Colonic mucosa (tissue), 4 donors: ENCODE measurements at regions of chr3 and their contacts with region 1.

Region 1: DNA sequence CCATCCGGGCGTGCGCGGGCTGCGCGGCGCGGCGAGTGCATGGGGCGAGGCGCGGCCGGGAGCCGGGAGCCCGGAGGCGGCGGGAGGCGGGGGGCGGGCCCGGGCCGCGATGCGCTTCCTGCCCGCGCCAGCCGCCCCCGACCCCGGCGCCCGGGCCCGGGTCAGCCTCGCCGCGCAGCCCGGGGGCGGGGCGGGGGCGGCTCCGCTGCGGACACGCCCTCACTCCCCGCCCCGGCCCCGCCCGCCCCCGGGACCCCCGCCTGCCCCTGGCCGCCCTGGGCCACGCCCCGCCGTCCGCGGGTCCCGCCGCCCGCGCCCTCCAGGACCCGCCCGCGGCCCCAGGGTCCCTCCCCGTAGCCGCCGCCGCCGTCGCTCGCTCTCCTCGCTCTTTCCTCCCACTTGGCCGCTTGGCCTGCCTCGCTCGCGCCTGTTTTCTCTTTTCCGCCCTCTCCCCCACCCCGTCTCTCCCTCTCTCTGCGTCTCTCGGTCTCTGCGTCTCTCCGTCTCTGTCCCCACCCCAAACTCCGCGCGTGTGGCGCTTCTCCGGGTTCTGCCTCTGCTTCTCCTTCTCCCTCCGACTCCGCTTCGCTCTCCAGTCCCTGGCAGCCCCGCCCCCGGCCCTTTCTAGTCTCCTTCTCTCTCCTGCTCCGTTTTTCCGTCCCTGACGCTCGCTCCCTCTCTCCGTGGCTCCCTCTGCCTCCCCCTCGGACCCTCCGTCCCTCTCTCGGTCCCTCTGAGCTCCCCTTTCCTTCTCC is at the start of gene PLXND1:
- DNase-seq: peak; percentile 64
- H3K4me3 ChIP-seq: peak within 1 kb of the TSS; percentile 39
- H3K27ac ChIP-seq: peak within 1 kb of the TSS; percentile 64
- H3K4me1 ChIP-seq: no peaks in the 10 kb centered on the region
- H3K27me3 ChIP-seq: peaks cover 20% of the 10 kb centered on the region
- CTCF ChIP-seq: no peak
- total RNA-seq, gene PLXND1: 25.6 to 26.7 TPM

Region 2: GRCh38 chr3:129399145-129399894 is 207.5 kb before region 1 on chr3:
- intact Hi-C with region 1: no loop called
- DNase-seq: peak; percentile 88
- H3K4me3 ChIP-seq: peak overlapping the region; percentile 84
- H3K27ac ChIP-seq: peak overlapping the region; percentile 60
- H3K4me1 ChIP-seq: no peaks in the 10 kb centered on the region
- H3K27me3 ChIP-seq: no peaks in the 10 kb centered on the region
- CTCF ChIP-seq: peak; percentile 87

Region 3: DNA sequence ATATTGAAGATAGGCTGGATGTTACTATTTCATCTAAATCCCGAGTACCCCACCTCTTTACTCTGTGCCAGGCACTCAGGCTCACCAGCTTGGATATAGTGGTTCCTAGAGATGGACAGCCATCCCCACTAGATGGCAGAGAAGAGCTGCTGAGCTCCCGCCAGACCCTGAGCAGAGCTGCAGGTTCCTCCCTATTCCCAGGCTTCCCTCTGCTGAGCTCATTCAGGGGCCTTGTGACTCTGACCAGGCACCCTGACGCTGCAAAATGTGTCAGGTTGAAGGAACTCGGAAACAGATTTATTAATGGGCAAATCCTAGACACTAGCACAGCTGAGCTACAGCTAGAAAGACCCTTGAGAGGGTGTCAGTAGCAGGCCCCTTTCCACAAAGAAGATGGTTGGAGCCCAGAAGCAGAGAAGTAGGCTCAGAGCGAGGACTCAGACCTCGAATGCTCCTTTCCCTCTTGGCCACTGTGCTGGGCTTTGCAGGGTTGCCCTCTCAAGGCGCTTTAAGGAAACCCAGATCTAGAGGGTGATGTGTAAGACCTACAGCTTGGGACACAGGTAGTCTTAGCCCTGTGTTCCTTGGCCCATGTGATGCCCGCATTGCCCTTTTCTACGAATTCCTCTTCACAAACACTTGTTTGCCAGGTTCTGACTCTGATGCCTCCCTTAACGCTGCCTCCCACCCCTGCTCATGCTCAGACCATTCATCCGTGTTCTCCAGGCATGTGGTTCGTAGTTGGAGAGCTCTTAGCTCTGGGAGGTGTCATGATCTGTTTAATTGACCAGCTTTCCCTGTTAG is 116.4 kb before region 1 on chr3:
- intact Hi-C with region 1: loop called (anchors 5 kb)
- DNase-seq: peak; percentile 77
- H3K4me3 ChIP-seq: no peak overlapping the region
- H3K27ac ChIP-seq: no peak overlapping the region
- H3K4me1 ChIP-seq: no peaks in the 10 kb centered on the region
- H3K27me3 ChIP-seq: no peaks in the 10 kb centered on the region
- CTCF ChIP-seq: peak; percentile 72

Region 4: DNA sequence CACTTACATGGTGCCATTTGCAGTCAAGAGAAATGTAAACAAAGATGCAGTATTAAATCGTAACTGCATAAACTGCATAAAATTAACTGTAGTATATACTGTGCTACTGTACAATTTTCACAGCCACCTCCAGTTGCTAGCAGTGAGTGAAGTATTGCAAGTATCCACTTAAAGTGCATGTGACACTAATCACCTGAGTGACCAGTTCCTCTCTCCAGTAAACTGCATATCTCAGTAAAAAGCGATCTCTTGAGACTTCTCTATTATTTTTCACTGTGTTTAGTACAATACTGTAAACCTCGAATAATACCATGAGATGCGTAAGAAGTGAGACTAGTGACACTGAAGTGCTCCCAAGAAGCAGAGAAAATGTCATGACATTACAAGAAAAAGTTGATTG is 111.4 kb after region 1 on chr3:
- intact Hi-C with region 1: no loop called
- DNase-seq: no peak
- H3K4me3 ChIP-seq: no peak overlapping the region
- H3K27ac ChIP-seq: no peak overlapping the region
- H3K4me1 ChIP-seq: no peaks in the 10 kb centered on the region
- H3K27me3 ChIP-seq: no peaks in the 10 kb centered on the region
- CTCF ChIP-seq: no peak